ENCODE measurements at regions of chr4 and their contacts with region 1.

Region 1: DNA sequence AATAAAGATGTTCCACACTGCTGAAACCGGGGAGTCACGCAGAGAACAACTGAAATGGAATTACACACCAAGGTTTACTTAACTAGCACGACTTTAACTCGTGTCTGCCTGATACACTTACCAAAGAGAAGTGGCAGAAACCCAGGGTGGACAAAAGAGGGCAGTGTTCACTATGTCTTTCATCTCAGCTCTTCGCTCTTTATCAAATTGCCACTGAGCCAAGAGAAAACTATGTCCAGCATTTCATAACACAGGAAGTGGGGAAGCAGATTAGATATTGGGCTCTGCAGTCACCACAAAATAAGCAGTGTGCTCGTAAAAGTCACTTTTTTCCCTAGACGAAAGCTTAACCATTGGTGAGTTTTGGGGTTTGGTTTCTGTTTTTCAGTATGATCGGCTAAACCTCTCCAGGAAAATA is 155.7 kb downstream of the CHIC2 start:
- DNase-seq: peak; percentile 72
- H3K4me3 ChIP-seq: peak overlapping the region in 2 of 4 donors; percentile 12
- H3K27ac ChIP-seq: peak overlapping the region in 3 of 4 donors; percentile 5 to 29 (median 21)
- H3K4me1 ChIP-seq: peaks cover 0 to 23% (median 16%) of the 10 kb centered on the region in 4 donors
- H3K27me3 ChIP-seq: peaks cover 0 to 55% (median 16%) of the 10 kb centered on the region in 3 donors
- CTCF ChIP-seq: peak; percentile 25 to 47 (median 39)
- EP300 ChIP-seq: no peak
- POLR2A ChIP-seq: no peak

Region 2: DNA sequence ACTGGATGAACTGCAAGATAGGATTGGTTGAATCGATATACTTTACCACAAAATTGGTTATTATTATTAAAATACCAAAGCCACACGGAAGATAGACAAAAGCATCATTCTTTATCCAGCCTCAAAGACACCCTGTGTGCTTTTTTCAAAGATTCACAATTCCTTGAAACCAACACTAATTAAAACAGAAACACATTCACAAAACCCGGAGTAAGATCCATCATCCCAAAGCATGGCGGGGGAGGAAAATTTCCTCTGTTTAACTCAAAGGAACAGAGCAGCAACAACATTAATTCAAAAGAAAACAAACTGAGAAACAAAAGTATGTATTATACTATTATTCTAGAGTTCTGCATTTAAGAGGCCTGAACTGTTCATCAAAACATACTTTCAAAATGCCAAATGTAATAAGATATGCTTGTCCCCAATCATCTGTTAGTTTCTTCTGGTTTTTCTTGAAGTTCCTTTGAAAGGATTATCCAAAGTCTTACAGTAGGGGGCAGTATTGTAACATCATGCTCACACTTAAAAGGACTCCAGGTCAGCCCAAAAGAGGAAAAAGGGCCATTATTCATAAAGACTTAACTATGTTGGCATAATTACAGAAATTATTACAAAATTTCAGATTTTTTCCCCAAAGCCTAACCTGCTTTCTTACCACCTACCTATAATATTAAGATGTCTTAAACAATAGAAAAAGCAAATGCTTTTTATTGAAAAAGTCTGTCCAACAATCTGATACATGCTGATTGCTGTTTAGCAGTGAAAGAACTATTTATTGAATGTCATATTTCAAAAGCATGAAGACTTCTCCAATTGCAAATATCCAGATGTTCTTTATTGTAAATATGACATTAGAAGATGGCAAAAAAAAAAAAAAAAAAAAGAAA is 711.5 kb before region 1 on chr4:
- intact Hi-C with region 1: loop called (anchors 10 kb)
- DNase-seq: no peak
- H3K4me3 ChIP-seq: no peak overlapping the region
- H3K27ac ChIP-seq: peak overlapping the region in 1 of 4 donors; percentile 11
- H3K4me1 ChIP-seq: peaks cover 0 to 4% (median 0%) of the 10 kb centered on the region in 4 donors
- H3K27me3 ChIP-seq: no peaks in the 10 kb centered on the region
- CTCF ChIP-seq: peak; percentile 22 to 61 (median 52)
- EP300 ChIP-seq: no peak
- POLR2A ChIP-seq: no peak

Region 3: DNA sequence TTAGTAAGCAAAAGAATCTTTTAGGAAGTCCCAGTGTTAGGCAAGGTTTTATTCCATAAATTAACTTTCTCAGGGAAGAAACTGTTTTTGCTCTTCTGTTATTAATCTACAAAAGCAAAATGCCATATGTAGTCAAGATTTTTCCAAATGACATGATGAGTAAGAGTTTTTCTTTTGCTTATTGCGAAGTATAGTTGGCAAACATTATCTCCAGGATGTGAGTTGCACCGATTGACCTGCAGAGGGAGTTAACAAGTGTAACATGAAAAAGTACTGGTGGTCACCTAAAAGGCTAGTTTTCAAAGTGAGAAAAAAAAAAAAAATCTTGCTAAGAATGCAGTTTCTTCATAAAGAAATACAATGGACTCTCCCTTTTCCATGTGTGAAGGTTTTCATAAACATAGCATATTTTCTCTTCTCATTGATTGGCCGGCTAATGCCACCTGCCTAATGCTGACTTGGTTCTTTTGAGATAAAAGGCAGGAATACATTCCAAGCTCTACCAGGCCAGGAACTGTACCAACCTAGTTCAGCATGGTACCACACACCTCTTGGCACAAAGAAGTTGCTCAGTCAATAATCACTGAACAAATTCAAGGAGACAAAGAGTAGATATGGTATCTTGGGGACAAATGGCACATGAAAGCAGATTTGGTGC is 417.6 kb before region 1 on chr4:
- intact Hi-C with region 1: loop called (anchors 10 kb)
- DNase-seq: no peak
- H3K4me3 ChIP-seq: no peak overlapping the region
- H3K27ac ChIP-seq: peak overlapping the region in 3 of 4 donors; percentile 29 to 39 (median 37)
- H3K4me1 ChIP-seq: peaks cover 0 to 4% (median 0%) of the 10 kb centered on the region in 4 donors
- H3K27me3 ChIP-seq: no peaks in the 10 kb centered on the region
- CTCF ChIP-seq: peak in 3 of 4 experiments; percentile 35 to 43 (median 39)
- EP300 ChIP-seq: no peak
- POLR2A ChIP-seq: no peak

Region 4: GRCh38 chr4:53706422-53707032 is 202.1 kb before region 1 on chr4:
- intact Hi-C with region 1: loop called (anchors 1 kb)
- DNase-seq: no peak
- H3K4me3 ChIP-seq: no peak overlapping the region
- H3K27ac ChIP-seq: no peak overlapping the region
- H3K4me1 ChIP-seq: peaks cover 0 to 18% (median 16%) of the 10 kb centered on the region in 4 donors
- H3K27me3 ChIP-seq: no peaks in the 10 kb centered on the region
- CTCF ChIP-seq: peak in 3 of 4 experiments; percentile 15 to 36 (median 17)
- EP300 ChIP-seq: no peak
- POLR2A ChIP-seq: no peak

Measured in sigmoid colon (tissue), 7 donors.